Ascending aorta (tissue), 2 donors: ENCODE measurements at regions of chr11 and their contacts with region 1.

Region 1: DNA sequence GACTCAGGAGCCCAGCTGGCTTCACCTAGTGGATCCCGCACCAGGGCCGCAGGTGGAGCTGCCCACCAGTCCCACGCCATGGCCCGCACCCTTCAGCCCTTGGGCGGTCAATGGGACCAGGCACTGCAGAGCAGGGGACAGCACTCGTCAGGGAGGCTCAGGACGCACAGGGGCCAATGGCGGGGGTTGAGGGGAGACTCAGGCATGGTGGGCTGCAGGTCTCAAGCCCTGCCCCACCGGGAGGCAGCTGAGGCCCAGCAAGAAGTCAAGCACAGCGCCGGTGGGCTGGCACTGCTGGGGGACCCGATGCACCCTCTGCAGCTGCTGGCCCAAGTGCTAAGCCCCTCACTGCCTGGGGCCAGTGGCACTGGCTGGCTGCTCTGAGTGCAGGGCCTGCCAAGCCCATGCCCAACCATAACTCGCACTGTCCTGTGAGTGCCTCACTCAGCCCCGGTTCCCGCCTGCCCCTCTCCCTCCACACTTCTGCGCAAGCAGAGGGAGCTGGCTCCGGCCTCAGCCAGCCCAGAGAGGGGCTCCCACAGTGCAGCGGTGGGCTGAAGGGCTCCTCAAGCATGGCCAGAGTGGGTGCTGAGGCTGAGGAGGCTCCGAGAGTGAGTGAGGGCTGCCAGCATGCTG is 111.7 kb upstream of the PGR start:
- DNase-seq: no peak
- H3K4me3 ChIP-seq: no peak overlapping the region
- H3K27ac ChIP-seq: no peak overlapping the region
- H3K4me1 ChIP-seq: peaks cover 0 to 3% of the 10 kb centered on the region in 2 donors
- H3K27me3 ChIP-seq: no peaks in the 10 kb centered on the region
- CTCF ChIP-seq: no peak

Region 2: GRCh38 chr11:101291279-101291678 is 50.0 kb after region 1 on chr11:
- intact Hi-C with region 1: loop called (anchors 5 kb)
- DNase-seq: no peak
- H3K4me3 ChIP-seq: no peak overlapping the region
- H3K27ac ChIP-seq: no peak overlapping the region
- H3K4me1 ChIP-seq: no peaks in the 10 kb centered on the region
- H3K27me3 ChIP-seq: no peaks in the 10 kb centered on the region
- CTCF ChIP-seq: no peak